CD4-positive, alpha-beta memory T cell (primary cell): ENCODE measurements at regions of chr15 and their contacts with region 1.

Region 1: DNA sequence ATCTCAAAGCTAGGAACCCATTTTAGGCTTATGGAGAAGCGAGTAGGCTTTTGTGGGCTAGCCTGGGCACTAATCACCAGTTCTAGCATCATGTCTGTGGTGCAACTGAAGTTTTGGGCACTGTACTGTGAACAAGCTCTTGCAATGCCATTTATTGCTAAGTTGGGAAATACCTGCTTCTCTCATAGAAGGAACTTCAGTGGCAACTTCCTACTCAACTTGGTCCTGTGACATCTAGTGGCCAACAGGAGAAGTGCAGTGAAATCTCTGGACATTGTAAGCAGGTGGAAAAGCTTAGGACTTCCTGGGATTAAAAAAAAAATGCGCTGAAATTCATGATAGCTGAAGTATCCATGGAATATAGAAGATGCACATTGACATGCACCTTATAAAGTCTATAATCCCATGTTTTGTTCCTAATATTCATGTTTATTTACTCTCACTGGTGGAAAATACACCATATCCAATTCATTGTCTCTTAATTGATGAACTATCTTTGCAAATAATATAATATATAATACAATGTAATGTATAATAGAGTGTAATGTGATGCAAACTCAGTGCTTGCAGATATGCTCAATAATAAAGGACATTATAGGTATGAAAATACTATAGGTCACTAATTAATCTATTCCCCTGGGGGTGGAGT is 6.5 kb upstream of the ALDH1A3 start:
- DNase-seq: peak; percentile 39 to 52 (median 51)
- H3K4me3 ChIP-seq: no peak overlapping the region
- H3K4me3 Mint-ChIP-seq: no peak overlapping the region
- H3K27ac ChIP-seq: no peak overlapping the region
- H3K27ac Mint-ChIP-seq: no peak overlapping the region
- H3K4me1 ChIP-seq: no peaks in the 10 kb centered on the region
- H3K4me1 Mint-ChIP-seq: peaks cover 0 to 1% (median under 1%) of the 10 kb centered on the region in 4 donors
- H3K27me3 ChIP-seq: no peaks in the 10 kb centered on the region
- H3K27me3 Mint-ChIP-seq: peaks cover 9 to 21% of the 10 kb centered on the region in 2 donors

Region 2: GRCh38 chr15:100627789-100628395 is 245.3 kb before region 1 on chr15:
- CTCF ChIA-PET with region 1: interaction called, 23 read pairs
- POLR2A ChIA-PET with region 1: no interaction called
- intact Hi-C with region 1: no loop called
- DNase-seq: peak; percentile 60 to 70 (median 64)
- H3K4me3 ChIP-seq: no peak overlapping the region
- H3K4me3 Mint-ChIP-seq: no peak overlapping the region
- H3K27ac ChIP-seq: no peak overlapping the region
- H3K27ac Mint-ChIP-seq: peak overlapping the region in 2 of 7 donors; percentile 64 to 68
- H3K4me1 ChIP-seq: no peaks in the 10 kb centered on the region
- H3K4me1 Mint-ChIP-seq: peaks cover 14 to 31% (median 23%) of the 10 kb centered on the region in 4 donors
- H3K27me3 ChIP-seq: no peaks in the 10 kb centered on the region
- H3K27me3 Mint-ChIP-seq: no peaks in the 10 kb centered on the region

Region 3: GRCh38 chr15:101013769-101014675 is 140.9 kb after region 1 on chr15:
- CTCF ChIA-PET with region 1: no interaction called
- POLR2A ChIA-PET with region 1: no interaction called
- intact Hi-C with region 1: no loop called
- DNase-seq: no peak
- H3K4me3 ChIP-seq: no peak overlapping the region
- H3K4me3 Mint-ChIP-seq: no peak overlapping the region
- H3K27ac ChIP-seq: no peak overlapping the region
- H3K27ac Mint-ChIP-seq: no peak overlapping the region
- H3K4me1 ChIP-seq: no peaks in the 10 kb centered on the region
- H3K4me1 Mint-ChIP-seq: peaks cover 0 to 5% (median under 1%) of the 10 kb centered on the region in 4 donors
- H3K27me3 ChIP-seq: no peaks in the 10 kb centered on the region
- H3K27me3 Mint-ChIP-seq: peaks cover 5 to 6% of the 10 kb centered on the region in 2 donors